K562 (cell line): ENCODE measurements at regions of chr11 and their contacts with region 1.

Region 1: GRCh38 chr11:130037058-130037457 is 32.6 kb upstream of the APLP2 start:
- DNase-seq: peak in 1 of 4 experiments; percentile 10
- ATAC-seq: peak; percentile 62
- H3K4me3 ChIP-seq: no peak overlapping the region
- H3K27ac ChIP-seq: no peak overlapping the region
- H3K4me1 ChIP-seq: peaks cover 6 to 10% of the 10 kb centered on the region in 2 experiments; a peak in 4 of 5 replicates
- H3K27me3 ChIP-seq: 0 out of 5 replicates have a peak, but pooled peaks cover 0 to under 1% of the 10 kb centered on the region in 2 experiments
- CTCF ChIP-seq: no peak
- EP300 ChIP-seq: no peak
- POLR2A ChIP-seq: no peak
- RAD21 ChIP-seq: no peak

Region 2: GRCh38 chr11:131544591-131544990 is 1507.5 kb after region 1 on chr11:
- CTCF ChIA-PET with region 1: no interaction called
- POLR2A ChIA-PET with region 1: no interaction called
- in situ Hi-C with region 1: loop called (anchors 10 kb)
- intact Hi-C with region 1: no loop called
- DNase-seq: no peak
- ATAC-seq: no peak
- H3K4me3 ChIP-seq: no peak overlapping the region
- H3K27ac ChIP-seq: no peak overlapping the region
- H3K4me1 ChIP-seq: no peaks in the 10 kb centered on the region
- H3K27me3 ChIP-seq: no peaks in the 10 kb centered on the region; a peak in 1 of 5 replicates
- CTCF ChIP-seq: no peak
- EP300 ChIP-seq: no peak
- POLR2A ChIP-seq: no peak
- RAD21 ChIP-seq: no peak